Heart right ventricle (tissue), 16 donors: ENCODE measurements at regions of chr11 and their contacts with region 1.

Region 1: GRCh38 chr11:76680518-76681425 is 10.2 kb upstream of the LRRC32 start:
- DNase-seq: peak; percentile 66 to 87
- ATAC-seq: peak; percentile 79 to 91 (median 84)
- H3K4me3 ChIP-seq: no peak overlapping the region
- H3K27ac ChIP-seq: peak overlapping the region in 1 of 10 donors; percentile 5
- H3K4me1 ChIP-seq: peaks cover 0 to 21% (median 9%) of the 10 kb centered on the region in 9 donors
- H3K27me3 ChIP-seq: no peaks in the 10 kb centered on the region
- CTCF ChIP-seq: peak; percentile 78 to 96 (median 90)

Region 2: GRCh38 chr11:76551400-76551799 is 129.4 kb before region 1 on chr11:
- intact Hi-C with region 1: loop called in 9 of 10 experiments (anchors 1 to 5 kb)
- DNase-seq: no peak
- ATAC-seq: peak in 1 of 8 donors; percentile 52
- H3K4me3 ChIP-seq: no peak overlapping the region
- H3K27ac ChIP-seq: no peak overlapping the region
- H3K4me1 ChIP-seq: peaks cover 0 to 20% (median 0%) of the 10 kb centered on the region in 9 donors
- H3K27me3 ChIP-seq: no peaks in the 10 kb centered on the region
- CTCF ChIP-seq: peak in 7 of 9 donors; percentile 37 to 67 (median 53)

Region 3: DNA sequence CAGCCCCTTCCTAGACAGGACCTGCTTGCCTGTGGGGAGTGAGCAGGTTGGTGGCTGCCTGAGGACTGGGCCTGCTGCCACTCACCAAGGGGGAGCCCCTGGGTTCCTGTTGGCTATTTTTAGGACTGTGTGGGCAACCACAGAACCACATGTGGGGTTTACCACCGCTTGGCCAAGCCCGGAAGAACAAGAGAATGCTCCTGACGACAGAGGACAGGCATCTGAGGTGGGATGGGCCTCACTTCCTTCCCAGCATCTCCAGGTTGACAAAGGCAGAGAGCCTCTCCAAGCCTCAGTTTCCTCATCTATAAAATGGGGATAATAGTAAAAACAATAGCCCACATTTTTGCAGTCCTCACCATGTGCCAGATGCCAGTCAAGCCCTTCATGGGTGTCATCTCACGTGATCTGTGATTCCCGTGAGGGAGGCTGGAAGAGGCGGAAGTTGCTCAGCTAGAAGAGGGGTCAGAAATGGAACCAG is 53.8 kb before region 1 on chr11:
- intact Hi-C with region 1: no loop called
- DNase-seq: no peak
- ATAC-seq: no peak
- H3K4me3 ChIP-seq: no peak overlapping the region
- H3K27ac ChIP-seq: peak overlapping the region in 4 of 10 donors; percentile 23 to 40 (median 30)
- H3K4me1 ChIP-seq: peaks cover 17 to 67% (median 32%) of the 10 kb centered on the region in 9 donors
- H3K27me3 ChIP-seq: no peaks in the 10 kb centered on the region
- CTCF ChIP-seq: no peak